ENCODE measurements at regions of chr3 and their contacts with region 1.

Region 1: GRCh38 chr3:113019182-113020137 is 28.7 kb downstream of the GTPBP8 start:
- DNase-seq: peak; percentile 96
- H3K4me3 ChIP-seq: peak overlapping the region; percentile 58 to 88
- H3K27ac ChIP-seq: peak overlapping the region; percentile 90 to 97
- H3K4me1 ChIP-seq: peaks cover 6 to 11% of the 10 kb centered on the region in 2 experiments; a peak in 3 of 4 replicates
- H3K27me3 ChIP-seq: no peaks in the 10 kb centered on the region
- CTCF ChIP-seq: no peak
- EP300 ChIP-seq: no peak
- RAD21 ChIP-seq: no peak

Region 2: GRCh38 chr3:112894258-112894657 is 125.2 kb before region 1 on chr3:
- CTCF ChIA-PET with region 1: no interaction called
- POLR2A ChIA-PET with region 1: no interaction called
- DNase-seq: no peak
- H3K4me3 ChIP-seq: no peak overlapping the region
- H3K27ac ChIP-seq: no peak overlapping the region
- H3K4me1 ChIP-seq: no peaks in the 10 kb centered on the region
- H3K27me3 ChIP-seq: no peaks in the 10 kb centered on the region
- CTCF ChIP-seq: no peak
- EP300 ChIP-seq: no peak
- RAD21 ChIP-seq: no peak

Region 3: GRCh38 chr3:112990672-112991602 is 28.5 kb before region 1 on chr3 and contains the start of gene GTPBP8:
- CTCF ChIA-PET with region 1: interaction called, 3 read pairs
- POLR2A ChIA-PET with region 1: interaction called, 14 read pairs
- DNase-seq: peak; percentile 87
- H3K4me3 ChIP-seq: peak within 1 kb of the TSS; percentile 82 to 88
- H3K27ac ChIP-seq: peak within 1 kb of the TSS; percentile 88 to 99
- H3K4me1 ChIP-seq: peaks cover 9 to 12% of the 10 kb centered on the region in 2 experiments; a peak in 3 of 4 replicates
- H3K27me3 ChIP-seq: no peaks in the 10 kb centered on the region
- CTCF ChIP-seq: peak; percentile 25; the same call in 1 of the 2 replicates
- EP300 ChIP-seq: no peak
- RAD21 ChIP-seq: 0 out of 2 replicates have a peak, but pooled peaks have one; percentile 15
- polyA plus RNA-seq, gene GTPBP8: 19.2 and 20.1 TPM in 2 replicates

Region 4: DNA sequence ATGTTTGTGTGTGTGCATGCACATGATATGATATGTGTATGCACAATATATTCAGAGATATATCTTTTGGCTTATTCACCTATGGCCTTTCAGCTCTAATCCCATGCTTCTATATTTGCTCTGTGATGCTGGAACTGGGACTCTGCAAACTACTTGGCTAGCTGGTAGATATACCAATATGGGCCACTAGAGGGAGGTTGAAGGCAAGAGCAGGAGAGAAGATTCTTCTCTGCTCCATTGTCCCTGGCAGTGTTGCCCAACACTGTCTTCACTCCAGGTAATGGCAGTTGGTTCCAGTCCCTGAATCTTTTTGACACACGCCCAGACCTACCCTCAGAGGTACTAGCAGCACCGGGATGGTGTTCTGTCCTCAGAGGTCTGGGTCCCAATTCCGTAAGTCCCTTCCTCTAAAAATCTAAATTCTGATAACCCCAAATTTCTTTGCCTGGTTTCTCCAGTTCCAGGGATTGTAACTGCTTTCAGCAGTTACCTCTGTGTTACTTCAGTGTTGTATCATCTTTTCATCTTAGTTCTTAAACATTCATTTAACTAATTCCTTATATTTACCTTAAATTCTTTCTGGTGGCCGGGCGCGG is 16.0 kb after region 1 on chr3:
- CTCF ChIA-PET with region 1: interaction called, 34 read pairs
- POLR2A ChIA-PET with region 1: no interaction called
- DNase-seq: peak; percentile 69
- H3K4me3 ChIP-seq: no peak overlapping the region
- H3K27ac ChIP-seq: no peak overlapping the region
- H3K4me1 ChIP-seq: no peaks in the 10 kb centered on the region
- H3K27me3 ChIP-seq: no peaks in the 10 kb centered on the region
- CTCF ChIP-seq: peak; percentile 79
- EP300 ChIP-seq: no peak
- RAD21 ChIP-seq: peak; percentile 69

Region 5: GRCh38 chr3:113249111-113249510 is 229.7 kb after region 1 on chr3:
- CTCF ChIA-PET with region 1: no interaction called
- POLR2A ChIA-PET with region 1: no interaction called
- DNase-seq: peak; percentile 60
- H3K4me3 ChIP-seq: no peak overlapping the region
- H3K27ac ChIP-seq: peak overlapping the region; percentile 44 to 65
- H3K4me1 ChIP-seq: peaks cover 10 to 26% of the 10 kb centered on the region in 2 experiments; a peak in 3 of 4 replicates
- H3K27me3 ChIP-seq: no peaks in the 10 kb centered on the region
- CTCF ChIP-seq: no peak
- EP300 ChIP-seq: peak in 1 of 2 experiments; percentile 58; a peak in 2 of 4 replicates
- RAD21 ChIP-seq: peak; percentile 33; the same call in 1 of the 2 replicates

Region 6: GRCh38 chr3:113421082-113421481 is 401.6 kb after region 1 on chr3:
- CTCF ChIA-PET with region 1: no interaction called
- POLR2A ChIA-PET with region 1: no interaction called
- DNase-seq: no peak
- H3K4me3 ChIP-seq: no peak overlapping the region
- H3K27ac ChIP-seq: no peak overlapping the region
- H3K4me1 ChIP-seq: no peaks in the 10 kb centered on the region
- H3K27me3 ChIP-seq: no peaks in the 10 kb centered on the region
- CTCF ChIP-seq: no peak
- EP300 ChIP-seq: no peak
- RAD21 ChIP-seq: no peak